ENCODE measurements at regions of chr12 and their contacts with region 1.

Region 1: GRCh38 chr12:108514973-108515814 is at the start of gene FICD:
- DNase-seq: peak; percentile 100
- H3K4me3 ChIP-seq: peak within 1 kb of the TSS; percentile 55 to 98 (median 89)
- H3K27ac ChIP-seq: peak within 1 kb of the TSS in 45 of 59 donors; percentile 8 to 87 (median 67)
- H3K27me3 ChIP-seq: no peaks in the 10 kb centered on the region
- CTCF ChIP-seq: peak in 43 of 56 donors; percentile 12 to 62 (median 34)
- total RNA-seq, gene FICD: 5.6 to 13.7 (median 8.3) TPM

Region 2: DNA sequence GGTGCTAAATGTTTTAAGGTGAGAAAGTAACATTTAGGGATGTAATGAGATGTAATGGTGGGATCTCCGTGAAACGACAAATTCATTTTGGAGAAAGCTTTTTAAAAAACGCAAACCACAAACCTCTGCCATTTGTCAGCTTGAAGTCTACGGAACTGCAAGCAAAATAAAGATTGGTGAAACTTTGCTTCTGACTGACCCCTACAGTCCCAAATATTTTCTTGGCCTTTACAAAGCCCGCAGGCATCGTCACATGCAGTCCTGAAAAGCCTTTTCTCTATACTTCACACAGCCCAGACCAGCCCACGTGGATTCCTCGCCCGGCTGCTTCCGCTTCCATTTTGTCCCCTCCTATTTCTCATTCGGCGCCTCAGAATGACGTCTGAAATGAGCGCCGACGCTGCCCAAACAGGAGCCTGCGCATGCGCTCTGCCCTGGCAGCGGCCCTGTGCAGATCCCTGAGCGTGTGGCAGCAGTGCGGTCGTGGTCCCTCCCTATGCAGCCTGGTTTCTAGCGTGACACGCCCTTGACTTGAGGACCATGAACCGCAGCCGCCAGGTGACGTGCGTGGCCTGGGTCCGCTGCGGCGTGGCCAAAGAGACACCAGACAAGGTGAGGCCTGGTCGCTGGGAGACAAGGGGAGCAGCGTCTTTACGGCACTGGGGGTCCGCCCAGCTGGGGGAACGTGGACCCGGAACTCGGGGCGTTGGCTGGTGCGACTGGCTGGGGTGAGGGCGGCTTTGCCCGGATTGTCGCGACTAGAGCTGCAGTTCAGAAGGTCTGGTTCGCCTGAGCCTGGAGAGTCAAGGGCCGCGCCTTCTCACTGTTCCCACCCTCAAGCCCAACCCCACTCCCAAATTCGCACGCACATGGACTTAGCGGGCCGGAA is 829.6 kb before region 1 on chr12 and contains the start of gene PWP1:
- intact Hi-C with region 1: loop called in 1 of 2 experiments (anchors 10 kb)
- DNase-seq: peak; percentile 85 to 93 (median 92)
- H3K4me3 ChIP-seq: peak within 1 kb of the TSS; percentile 60 to 100 (median 93)
- H3K27ac ChIP-seq: peak within 1 kb of the TSS in 44 of 59 donors; percentile 7 to 92 (median 68)
- H3K27me3 ChIP-seq: peaks cover 0 to 7% (median 0%) of the 10 kb centered on the region in 45 donors
- CTCF ChIP-seq: peak in 38 of 56 donors; percentile 9 to 69 (median 36)
- total RNA-seq, gene PWP1: 14.2 to 42.9 (median 30.0) TPM

Region 3: GRCh38 chr12:107912421-107913004 is 602.7 kb before region 1 on chr12:
- intact Hi-C with region 1: loop called (anchors 5 to 10 kb)
- DNase-seq: peak in 8 of 10 donors; percentile 4 to 52 (median 37)
- H3K4me3 ChIP-seq: peak overlapping the region in 14 of 59 donors; percentile 4 to 42 (median 18)
- H3K27ac ChIP-seq: no peak overlapping the region
- H3K27me3 ChIP-seq: peaks cover 0 to 65% (median 30%) of the 10 kb centered on the region in 45 donors
- CTCF ChIP-seq: peak in 52 of 56 donors; percentile 25 to 66 (median 48)

Region 4: GRCh38 chr12:107983756-107984472 is 531.3 kb before region 1 on chr12:
- intact Hi-C with region 1: loop called in 1 of 2 experiments (anchors 10 kb)
- DNase-seq: no peak
- H3K4me3 ChIP-seq: no peak overlapping the region
- H3K27ac ChIP-seq: peak overlapping the region in 5 of 59 donors; percentile 22 to 69 (median 24)
- H3K27me3 ChIP-seq: peaks cover 0 to 28% (median 0%) of the 10 kb centered on the region in 45 donors
- CTCF ChIP-seq: no peak

Region 5: DNA sequence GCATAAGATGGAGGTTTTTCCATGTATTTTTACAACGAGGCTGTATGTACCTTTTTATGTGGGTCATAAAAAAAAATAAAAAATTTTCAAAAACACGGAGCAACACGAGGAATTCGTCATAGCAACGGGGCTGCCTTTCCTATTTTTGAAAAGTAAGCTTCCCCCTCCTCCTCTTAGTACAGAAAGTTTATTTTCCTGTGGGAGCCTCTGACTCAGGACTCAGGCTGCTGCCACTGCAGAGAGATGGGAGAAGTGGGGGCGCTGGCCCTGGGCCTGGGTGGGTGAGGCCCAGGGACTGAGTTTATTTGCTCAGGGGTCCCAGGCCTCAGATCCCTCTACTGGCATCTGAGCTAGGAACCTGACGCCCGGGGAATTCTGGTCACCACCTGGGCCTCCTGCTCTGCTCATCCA is 165.9 kb before region 1 on chr12:
- intact Hi-C with region 1: no loop called
- DNase-seq: peak in 4 of 10 donors; percentile 35 to 67 (median 44)
- H3K4me3 ChIP-seq: no peak overlapping the region
- H3K27ac ChIP-seq: peak overlapping the region in 55 of 59 donors; percentile 1 to 93 (median 78)
- H3K27me3 ChIP-seq: no peaks in the 10 kb centered on the region
- CTCF ChIP-seq: no peak

Region 6: DNA sequence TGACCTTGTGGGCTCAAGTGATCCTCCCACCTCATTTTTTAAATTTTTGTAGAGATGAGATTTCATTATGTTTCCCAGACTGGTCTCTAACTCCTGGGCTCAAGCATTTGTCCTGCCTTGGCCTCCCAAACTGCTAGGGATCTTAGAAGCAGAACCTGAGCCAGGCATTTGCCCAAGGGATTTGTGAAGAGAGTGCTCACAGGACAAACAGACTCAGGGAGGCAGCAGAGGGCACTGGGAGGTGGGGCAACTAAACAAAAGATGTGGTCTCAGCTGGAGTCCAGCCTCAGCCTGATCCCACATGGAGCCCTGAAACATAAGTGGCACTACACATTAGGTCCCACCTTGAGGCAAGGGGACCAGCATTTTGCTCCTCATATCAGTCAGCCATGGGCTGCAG is 89.9 kb before region 1 on chr12:
- intact Hi-C with region 1: no loop called
- DNase-seq: no peak
- H3K4me3 ChIP-seq: no peak overlapping the region
- H3K27ac ChIP-seq: no peak overlapping the region
- H3K27me3 ChIP-seq: peaks cover 0 to 5% (median 0%) of the 10 kb centered on the region in 45 donors
- CTCF ChIP-seq: no peak

Region 7: DNA sequence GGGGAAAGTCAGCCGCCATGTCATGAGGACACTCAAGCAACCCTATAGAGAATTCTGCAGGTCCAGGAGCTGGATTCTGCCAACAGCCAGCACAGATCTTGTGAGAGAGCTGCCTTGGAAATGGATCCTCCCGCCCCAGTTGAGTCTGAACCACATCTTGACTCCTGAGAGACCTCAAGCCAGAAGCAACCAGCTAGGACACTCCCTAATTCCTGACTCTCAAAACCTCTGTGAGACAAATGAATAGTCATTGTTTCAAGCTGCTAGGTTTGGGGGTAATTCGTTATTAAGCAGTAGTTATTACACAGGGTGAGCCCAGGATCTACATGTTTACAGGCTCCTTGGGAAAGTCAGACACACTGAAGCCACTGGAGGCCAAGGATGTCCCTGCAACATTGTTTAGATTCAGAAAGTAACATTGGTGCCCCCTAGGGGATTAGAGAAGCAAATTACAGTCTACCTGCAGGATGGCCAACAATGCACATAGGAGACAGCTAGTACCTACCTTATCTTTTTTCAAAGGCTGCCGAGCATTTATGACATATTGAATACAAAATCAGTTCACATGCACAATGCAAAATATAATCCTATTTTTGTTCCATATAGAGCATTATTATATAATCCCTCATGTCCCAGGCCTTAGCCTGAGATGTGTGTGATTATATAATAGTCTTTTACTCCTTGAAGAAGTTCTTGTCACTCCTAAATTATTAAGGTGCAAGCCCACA is 58.0 kb before region 1 on chr12:
- intact Hi-C with region 1: loop called in 1 of 2 experiments (anchors 2 kb)
- DNase-seq: peak in 2 of 10 donors; percentile 38 to 41
- H3K4me3 ChIP-seq: no peak overlapping the region
- H3K27ac ChIP-seq: peak overlapping the region in 32 of 59 donors; percentile 0 to 77 (median 44)
- H3K27me3 ChIP-seq: peaks cover 0 to 8% (median 0%) of the 10 kb centered on the region in 45 donors
- CTCF ChIP-seq: peak; percentile 36 to 78 (median 66)

Region 8: GRCh38 chr12:108618079-108618952 is 103.1 kb after region 1 on chr12:
- intact Hi-C with region 1: loop called in 1 of 2 experiments (anchors 5 kb)
- DNase-seq: peak; percentile 67 to 87 (median 78)
- H3K4me3 ChIP-seq: no peak overlapping the region
- H3K27ac ChIP-seq: peak overlapping the region in 7 of 59 donors; percentile 0 to 28 (median 13)
- H3K27me3 ChIP-seq: no peaks in the 10 kb centered on the region
- CTCF ChIP-seq: peak; percentile 93 to 100 (median 99)